ENCODE measurements at regions of chr14 and their contacts with region 1.

Region 1: DNA sequence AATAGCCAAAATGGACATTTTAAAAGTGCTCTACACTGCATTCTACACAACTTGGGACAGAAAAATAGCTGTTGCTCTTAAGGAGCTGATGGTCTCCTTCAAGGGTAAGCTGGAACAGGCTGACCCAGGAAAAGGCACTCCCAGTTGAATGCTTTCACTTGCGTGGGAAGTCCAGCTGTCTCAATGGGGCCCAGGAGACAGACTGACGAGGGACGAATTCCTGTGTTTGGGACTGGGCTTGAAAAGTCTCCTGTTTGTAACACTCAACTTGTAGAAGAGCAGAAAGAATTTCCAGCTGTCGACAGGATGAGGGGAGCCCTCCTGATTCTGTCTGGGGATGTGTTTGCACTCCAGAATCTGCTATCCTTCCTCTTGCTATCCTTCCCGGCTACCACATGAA is 180.8 kb downstream of the ZFP36L1 start:
- DNase-seq: no peak
- ATAC-seq: no peak
- H3K4me3 ChIP-seq: no peak overlapping the region
- H3K27ac ChIP-seq: no peak overlapping the region
- H3K4me1 ChIP-seq: peaks cover 12% of the 10 kb centered on the region
- CTCF ChIP-seq: no peak
- EP300 ChIP-seq: no peak
- POLR2A ChIP-seq: no peak
- RAD21 ChIP-seq: no peak

Region 2: DNA sequence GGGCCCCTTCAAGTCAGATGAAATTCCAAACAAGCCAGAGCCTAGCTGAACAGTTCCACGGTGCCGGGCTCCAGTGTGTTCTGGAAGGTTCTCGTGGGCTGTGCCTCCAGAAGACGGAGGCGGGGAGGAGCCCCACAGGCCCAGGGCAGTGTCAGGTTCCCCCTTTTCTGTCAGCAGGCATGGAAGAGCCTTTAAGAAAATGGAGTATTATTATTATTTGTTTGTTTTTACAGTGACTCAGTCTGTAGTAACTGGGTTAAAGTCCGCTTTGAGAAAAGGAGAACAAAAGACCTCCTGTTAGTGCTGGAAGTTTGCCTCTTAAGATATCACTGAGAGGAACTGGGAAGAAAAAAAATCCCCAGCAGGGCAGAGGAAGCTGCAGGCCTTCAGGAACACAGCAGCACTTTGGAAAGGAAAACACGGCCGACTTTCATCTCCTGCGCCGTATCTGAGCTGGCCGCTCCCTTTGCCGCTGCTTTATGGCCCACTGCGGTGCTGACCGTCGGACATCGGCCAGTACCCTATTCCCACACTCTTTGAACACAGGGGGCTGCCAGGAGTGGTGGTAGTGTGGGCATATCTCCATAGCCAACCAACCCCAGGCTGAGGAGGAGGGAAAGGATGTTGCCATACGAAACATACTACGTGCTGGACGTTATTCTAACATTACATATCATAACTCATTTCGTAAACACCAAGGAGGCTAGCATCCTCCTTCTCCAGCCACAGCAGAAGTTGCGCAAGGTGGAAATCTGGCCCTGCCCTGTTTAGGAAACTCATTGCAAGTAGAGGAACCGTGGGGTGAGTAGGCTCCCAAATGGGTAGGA is 13.2 kb before region 1 on chr14:
- CTCF ChIA-PET with region 1: interaction called, 13 read pairs
- POLR2A ChIA-PET with region 1: no interaction called
- DNase-seq: peak; percentile 92 to 95
- ATAC-seq: peak; percentile 88 to 93
- H3K4me3 ChIP-seq: peak overlapping the region; percentile 25; the same call in 2 of the 3 replicates
- H3K27ac ChIP-seq: peak overlapping the region; percentile 94 to 99
- H3K4me1 ChIP-seq: peaks cover 34% of the 10 kb centered on the region
- CTCF ChIP-seq: no peak
- EP300 ChIP-seq: peak; percentile 14 to 34; a peak in 2 of 5 replicates
- POLR2A ChIP-seq: peak; percentile 17
- RAD21 ChIP-seq: peak in 1 of 2 experiments; percentile 28; a peak in 2 of 5 replicates